Motor neuron (in vitro differentiated cells): ENCODE measurements at regions of chr3 and their contacts with region 1.

Region 1: GRCh38 chr3:131026321-131027178 is at the starts of genes ASTE1 and NEK11:
- ATAC-seq: peak; percentile 86 to 98 (median 96)
- H3K4me3 ChIP-seq: peak within 1 kb of the TSS; percentile 28 to 41 (median 33)
- H3K27ac ChIP-seq: peak within 1 kb of the TSS in 1 of 2 donors; percentile 29
- H3K4me1 ChIP-seq: no peaks in the 10 kb centered on the region
- total RNA-seq, gene ASTE1: 1.1 to 7.5 (median 3.5) TPM
- total RNA-seq, gene NEK11: 1.1 to 10.3 (median 3.4) TPM

Region 2: GRCh38 chr3:131502530-131503245 is 476.1 kb after region 1 on chr3 and contains the start of gene MRPL3:
- in situ Hi-C with region 1: loop called in 1 of 9 experiments (anchors 25 kb)
- ATAC-seq: peak; percentile 93 to 97 (median 96)
- H3K4me3 ChIP-seq: peak within 1 kb of the TSS; percentile 65 to 97 (median 89)
- H3K27ac ChIP-seq: peak within 1 kb of the TSS; percentile 88 to 95
- H3K4me1 ChIP-seq: peaks cover 11 to 16% of the 10 kb centered on the region in 2 donors
- total RNA-seq, gene MRPL3: 78.2 to 172 (median 113) TPM